MCF 10A (cell line): ENCODE measurements at regions of chr6 and their contacts with region 1.

Region 1: DNA sequence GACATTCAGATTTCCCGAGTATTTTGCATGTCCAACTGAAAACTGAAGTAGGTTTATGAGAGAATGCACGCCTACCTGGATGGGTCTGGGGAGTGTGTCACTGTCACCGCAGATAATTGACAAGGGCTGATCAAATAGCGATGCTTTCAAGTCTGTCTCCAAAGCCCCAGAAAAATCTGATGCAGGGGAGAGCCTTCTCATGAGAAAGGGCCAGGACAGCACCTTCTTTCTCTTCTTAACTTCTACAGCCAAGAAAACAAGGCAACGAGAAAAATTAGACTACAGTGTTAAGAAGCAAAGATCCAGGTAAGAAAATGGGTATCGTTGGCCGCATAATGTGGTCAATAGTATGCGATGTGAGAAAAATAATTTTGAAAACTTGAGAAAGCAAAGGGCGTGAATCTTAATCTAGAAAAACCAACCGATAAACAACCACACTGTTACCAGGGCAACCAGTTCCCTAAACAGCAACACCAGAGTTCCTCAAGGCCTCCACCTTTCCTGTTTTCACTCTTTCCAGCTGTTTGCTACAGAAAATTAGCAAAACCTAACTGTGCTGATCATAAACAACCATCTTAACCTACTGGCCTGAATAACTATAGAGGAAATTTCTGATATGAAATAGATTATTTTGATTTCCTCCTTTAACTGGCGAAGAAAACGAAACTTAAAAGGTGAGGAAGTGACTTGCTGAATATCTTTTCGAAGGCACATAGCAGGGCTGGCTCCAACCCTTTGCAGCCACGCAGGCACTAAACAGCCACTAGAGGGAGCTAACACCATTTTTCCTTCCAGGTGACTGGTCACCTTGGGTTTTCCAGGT is 2.6 kb downstream of the TAGAP start:
- DNase-seq: peak; percentile 85
- H3K4me3 Mint-ChIP-seq: no peak overlapping the region
- H3K27ac Mint-ChIP-seq: no peak overlapping the region
- H3K4me1 Mint-ChIP-seq: peaks cover 21% of the 10 kb centered on the region
- H3K27me3 Mint-ChIP-seq: peaks cover 19% of the 10 kb centered on the region
- CTCF ChIP-seq: peak; percentile 81

Region 2: GRCh38 chr6:158879180-158879579 is 163.0 kb before region 1 on chr6:
- CTCF ChIA-PET with region 1: no interaction called
- POLR2A ChIA-PET with region 1: no interaction called
- intact Hi-C with region 1: no loop called
- DNase-seq: no peak
- H3K4me3 Mint-ChIP-seq: no peak overlapping the region
- H3K27ac Mint-ChIP-seq: peak overlapping the region; percentile 28
- H3K4me1 Mint-ChIP-seq: no peaks in the 10 kb centered on the region
- H3K27me3 Mint-ChIP-seq: no peaks in the 10 kb centered on the region
- CTCF ChIP-seq: no peak

Region 3: GRCh38 chr6:159110013-159110412 is 67.8 kb after region 1 on chr6:
- CTCF ChIA-PET with region 1: interaction called, 73 read pairs
- POLR2A ChIA-PET with region 1: interaction called, 9 read pairs
- intact Hi-C with region 1: no loop called
- DNase-seq: peak; percentile 58
- H3K4me3 Mint-ChIP-seq: no peak overlapping the region
- H3K27ac Mint-ChIP-seq: no peak overlapping the region
- H3K4me1 Mint-ChIP-seq: no peaks in the 10 kb centered on the region
- H3K27me3 Mint-ChIP-seq: no peaks in the 10 kb centered on the region
- CTCF ChIP-seq: peak; percentile 63

Region 4: DNA sequence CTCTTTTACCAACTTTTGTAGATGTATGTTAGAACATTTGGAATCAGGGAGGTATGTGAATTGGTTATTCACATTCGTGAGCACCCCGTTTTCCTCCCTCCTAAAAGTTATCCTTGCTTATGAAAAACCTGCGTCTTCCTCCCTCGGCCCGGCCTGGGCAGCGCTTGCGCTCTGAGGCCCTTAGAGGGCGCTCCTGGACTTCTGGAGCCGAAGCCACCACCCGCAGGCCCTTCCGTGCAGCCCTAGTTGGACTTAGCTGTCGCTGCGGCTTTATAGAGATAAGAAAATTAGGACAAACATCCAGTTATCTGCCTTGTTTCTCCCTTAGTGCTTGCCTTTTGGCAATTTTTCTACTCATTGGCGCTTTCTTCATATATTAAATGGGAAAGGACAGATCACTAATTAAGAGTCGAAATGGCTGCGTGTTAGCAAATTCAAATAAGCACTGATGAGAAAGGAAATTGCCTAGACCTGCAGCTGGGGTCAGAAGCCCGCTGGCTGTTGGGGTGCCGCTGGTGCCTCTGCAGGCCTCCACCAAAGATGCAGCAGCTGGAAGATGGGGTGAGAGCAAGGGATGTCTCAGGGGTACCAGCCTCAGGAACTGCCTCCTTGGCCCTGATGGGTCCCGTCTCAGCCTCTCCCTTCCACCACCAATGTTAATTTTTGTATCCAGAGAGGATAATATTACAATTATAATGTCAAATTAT is 132.2 kb after region 1 on chr6:
- CTCF ChIA-PET with region 1: no interaction called
- POLR2A ChIA-PET with region 1: no interaction called
- intact Hi-C with region 1: no loop called
- DNase-seq: peak; percentile 69
- H3K4me3 Mint-ChIP-seq: no peak overlapping the region
- H3K27ac Mint-ChIP-seq: no peak overlapping the region
- H3K4me1 Mint-ChIP-seq: peaks cover 8% of the 10 kb centered on the region
- H3K27me3 Mint-ChIP-seq: peaks cover 51% of the 10 kb centered on the region
- CTCF ChIP-seq: peak; percentile 96

Region 5: DNA sequence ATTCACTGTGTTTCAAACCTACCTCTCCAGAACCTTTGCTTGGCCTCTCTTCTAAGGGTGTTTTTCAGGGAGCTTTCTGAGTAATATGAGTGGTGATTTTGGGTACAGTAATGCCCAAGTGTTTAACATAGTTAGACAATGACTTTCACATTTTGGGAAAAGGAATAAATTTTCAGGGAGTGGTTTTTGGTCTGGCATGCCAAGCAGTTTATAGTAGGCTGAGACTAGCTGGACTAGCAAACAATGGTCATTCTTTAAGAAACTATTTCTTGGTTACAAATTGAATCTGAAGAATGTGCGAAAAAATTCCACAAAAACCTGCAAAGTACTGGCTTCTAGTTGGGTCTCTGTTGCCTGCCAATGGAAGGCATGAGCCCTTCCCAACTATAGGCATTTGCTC is 142.3 kb after region 1 on chr6:
- CTCF ChIA-PET with region 1: no interaction called
- POLR2A ChIA-PET with region 1: no interaction called
- intact Hi-C with region 1: no loop called
- DNase-seq: no peak
- H3K4me3 Mint-ChIP-seq: no peak overlapping the region
- H3K27ac Mint-ChIP-seq: no peak overlapping the region
- H3K4me1 Mint-ChIP-seq: no peaks in the 10 kb centered on the region
- H3K27me3 Mint-ChIP-seq: peaks cover 11% of the 10 kb centered on the region
- CTCF ChIP-seq: no peak